OCI-LY7 (cell line): ENCODE measurements at regions of chr5 and their contacts with region 1.

Region 1: DNA sequence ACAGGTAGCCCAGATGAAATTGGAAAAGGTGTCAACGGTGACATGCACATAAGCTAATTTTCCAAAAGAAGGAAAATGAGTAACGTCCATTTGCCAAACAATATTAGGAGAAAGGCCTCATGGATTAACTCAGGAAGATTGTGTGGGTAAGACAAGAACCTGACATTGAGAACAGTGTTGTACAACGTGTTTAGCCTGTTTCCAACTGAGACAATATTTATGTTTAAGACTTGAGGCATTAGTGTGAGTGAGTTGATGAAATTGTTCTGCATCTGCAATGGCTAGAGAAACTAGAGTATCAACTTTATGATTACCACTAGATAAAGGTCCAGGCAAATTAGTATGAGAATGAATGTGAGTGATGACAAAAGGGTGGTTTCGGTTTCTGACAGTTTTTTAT is 191.3 kb upstream of the RAI14 start:
- DNase-seq: no peak
- H3K4me3 ChIP-seq: no peak overlapping the region
- H3K27ac ChIP-seq: no peak overlapping the region
- H3K4me1 ChIP-seq: no peaks in the 10 kb centered on the region
- CTCF ChIP-seq: no peak

Region 2: GRCh38 chr5:33999986-34000385 is 464.8 kb before region 1 on chr5:
- CTCF ChIA-PET with region 1: no interaction called
- POLR2A ChIA-PET with region 1: no interaction called
- intact Hi-C with region 1: loop called (anchors 2 kb)
- DNase-seq: no peak
- H3K4me3 ChIP-seq: no peak overlapping the region
- H3K27ac ChIP-seq: no peak overlapping the region
- H3K4me1 ChIP-seq: no peaks in the 10 kb centered on the region
- CTCF ChIP-seq: no peak